ENCODE measurements at regions of chr1 and their contacts with region 1.

Region 1: DNA sequence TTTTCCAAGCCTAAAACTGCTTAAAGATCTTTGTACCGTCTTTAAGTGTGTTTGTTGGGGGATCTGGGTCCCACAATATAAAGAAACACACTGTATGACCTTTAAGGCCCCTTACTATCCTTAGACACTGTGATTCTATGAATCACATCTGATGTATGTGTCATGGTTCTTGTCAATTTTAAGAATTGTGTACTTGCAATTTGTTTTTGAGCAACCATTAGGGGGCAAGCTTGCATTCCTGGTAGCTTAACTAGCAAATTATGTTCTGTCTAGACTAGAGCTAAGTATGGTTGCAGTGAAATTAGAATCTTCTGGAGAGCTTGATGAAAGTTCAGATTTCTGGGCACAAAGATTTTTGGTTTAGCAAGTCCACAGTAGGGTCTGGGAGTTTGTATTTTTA is 219.5 kb downstream of the TPR start:
- DNase-seq: peak; percentile 75
- ATAC-seq: peak; percentile 50
- H3K4me3 ChIP-seq: no peak overlapping the region
- H3K27ac ChIP-seq: no peak overlapping the region; the same call in 1 of the 2 replicates
- H3K4me1 ChIP-seq: peaks cover 46% of the 10 kb centered on the region
- H3K27me3 ChIP-seq: no peaks in the 10 kb centered on the region
- CTCF ChIP-seq: peak; percentile 80

Region 2: GRCh38 chr1:185720633-185721272 is 434.8 kb before region 1 on chr1:
- CTCF ChIA-PET with region 1: interaction called, 3 read pairs
- POLR2A ChIA-PET with region 1: no interaction called
- intact Hi-C with region 1: loop called (anchors 5 kb)
- DNase-seq: peak; percentile 49
- ATAC-seq: peak; percentile 35
- H3K4me3 ChIP-seq: no peak overlapping the region
- H3K27ac ChIP-seq: no peak overlapping the region
- H3K4me1 ChIP-seq: peaks cover 21% of the 10 kb centered on the region
- H3K27me3 ChIP-seq: no peaks in the 10 kb centered on the region
- CTCF ChIP-seq: peak; percentile 72

Region 3: DNA sequence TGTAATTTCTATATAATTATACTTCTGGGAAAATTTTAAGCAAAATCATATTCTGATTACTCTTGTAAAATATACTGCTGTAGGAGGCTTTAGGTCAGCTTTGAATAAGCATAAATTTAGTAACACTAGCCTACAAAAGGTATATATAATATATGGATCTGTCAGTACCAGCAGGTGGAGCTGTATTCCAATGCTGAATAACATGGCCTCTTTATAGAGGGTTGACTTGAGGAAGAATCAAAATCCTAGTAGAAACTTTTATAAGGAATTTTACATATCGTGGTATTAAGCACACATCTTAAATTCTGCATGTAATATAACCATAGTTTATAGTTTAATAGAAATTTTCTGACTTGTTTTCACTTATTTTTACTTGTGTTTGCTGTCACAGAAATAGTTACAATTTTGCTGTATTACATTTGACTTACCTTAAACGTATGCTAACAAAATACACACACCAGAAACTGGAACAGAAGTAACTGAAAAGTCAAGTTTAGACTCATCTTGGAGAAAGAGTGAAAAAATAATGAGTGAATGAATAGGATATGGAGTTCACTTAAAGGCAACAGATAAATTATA is 342.1 kb before region 1 on chr1:
- CTCF ChIA-PET with region 1: no interaction called
- POLR2A ChIA-PET with region 1: no interaction called
- intact Hi-C with region 1: loop called (anchors 1 kb)
- DNase-seq: peak; percentile 73
- ATAC-seq: peak; percentile 84
- H3K4me3 ChIP-seq: no peak overlapping the region
- H3K27ac ChIP-seq: no peak overlapping the region
- H3K4me1 ChIP-seq: no peaks in the 10 kb centered on the region
- H3K27me3 ChIP-seq: no peaks in the 10 kb centered on the region
- CTCF ChIP-seq: peak; percentile 70

Region 4: DNA sequence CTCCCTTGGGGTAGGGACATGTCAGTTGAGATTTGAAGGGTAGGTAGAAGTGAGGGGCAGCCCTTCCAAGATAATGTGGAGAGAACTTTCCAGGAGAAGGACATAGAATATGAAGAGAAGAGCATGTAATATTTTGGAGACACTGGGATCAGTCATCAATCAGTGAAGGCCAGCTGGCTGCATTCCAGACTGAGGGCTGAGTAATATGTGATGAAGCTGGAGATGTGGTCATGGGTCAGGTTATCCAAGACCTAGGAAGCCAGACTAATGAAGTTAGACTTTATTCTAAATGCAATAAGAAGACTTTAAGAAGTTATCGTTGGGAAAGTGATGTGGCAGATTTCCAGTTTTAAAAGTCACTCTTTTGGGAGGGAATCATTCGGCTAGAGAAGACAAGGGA is 159.4 kb before region 1 on chr1:
- CTCF ChIA-PET with region 1: no interaction called
- POLR2A ChIA-PET with region 1: no interaction called
- intact Hi-C with region 1: loop called (anchors 10 kb)
- DNase-seq: peak; percentile 92
- ATAC-seq: peak; percentile 85
- H3K4me3 ChIP-seq: no peak overlapping the region
- H3K27ac ChIP-seq: no peak overlapping the region
- H3K4me1 ChIP-seq: peaks cover 14% of the 10 kb centered on the region
- H3K27me3 ChIP-seq: no peaks in the 10 kb centered on the region
- CTCF ChIP-seq: no peak

Region 5: DNA sequence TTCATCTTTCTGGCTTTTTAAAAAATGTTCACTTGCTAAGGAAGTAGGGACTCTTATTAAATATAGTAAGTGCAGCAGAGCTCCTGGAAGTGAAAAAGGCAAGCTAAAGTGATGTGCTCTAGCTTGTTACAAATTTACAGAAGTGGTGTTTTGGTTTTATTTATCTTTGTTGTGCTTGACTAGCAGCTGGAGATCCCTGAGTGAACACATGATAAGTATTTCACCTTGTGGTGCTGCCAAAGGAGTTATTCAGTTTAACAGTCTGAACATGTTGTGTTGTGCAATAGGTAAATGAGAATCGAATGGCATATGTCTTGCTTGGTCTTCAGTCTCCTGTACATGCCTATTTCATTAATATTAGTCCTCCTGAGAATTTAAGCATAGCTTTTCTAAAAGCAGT is 96.3 kb before region 1 on chr1:
- CTCF ChIA-PET with region 1: no interaction called
- POLR2A ChIA-PET with region 1: no interaction called
- intact Hi-C with region 1: loop called (anchors 5 kb)
- DNase-seq: no peak
- ATAC-seq: no peak
- H3K4me3 ChIP-seq: no peak overlapping the region
- H3K27ac ChIP-seq: no peak overlapping the region
- H3K4me1 ChIP-seq: peaks cover 28% of the 10 kb centered on the region
- H3K27me3 ChIP-seq: no peaks in the 10 kb centered on the region
- CTCF ChIP-seq: no peak

Region 6: GRCh38 chr1:186212544-186213226 is 57.1 kb after region 1 on chr1:
- CTCF ChIA-PET with region 1: interaction called, 13 read pairs
- POLR2A ChIA-PET with region 1: no interaction called
- intact Hi-C with region 1: no loop called
- DNase-seq: peak; percentile 82
- ATAC-seq: peak; percentile 82
- H3K4me3 ChIP-seq: no peak overlapping the region
- H3K27ac ChIP-seq: no peak overlapping the region
- H3K4me1 ChIP-seq: 0 out of 2 replicates have a peak, but pooled peaks cover 5% of the 10 kb centered on the region
- H3K27me3 ChIP-seq: no peaks in the 10 kb centered on the region
- CTCF ChIP-seq: peak; percentile 89